Dorsolateral prefrontal cortex (tissue), 120 donors: ENCODE measurements at regions of chr5 and their contacts with region 1.

Region 1: GRCh38 chr5:180366326-180366725 is 13.2 kb upstream of the GFPT2 start:
- DNase-seq: peak; percentile 49 to 80 (median 72)
- H3K4me3 ChIP-seq: peak overlapping the region in 5 of 59 donors; percentile 2 to 20 (median 6)
- H3K27ac ChIP-seq: peak overlapping the region in 43 of 59 donors; percentile 11 to 89 (median 45)
- H3K27me3 ChIP-seq: no peaks in the 10 kb centered on the region
- CTCF ChIP-seq: peak in 6 of 56 donors; percentile 10 to 30 (median 14)

Region 2: GRCh38 chr5:180353048-180353979 is 13.0 kb before region 1 on chr5 and contains the start of gene GFPT2:
- intact Hi-C with region 1: loop called in 1 of 2 experiments (anchors 2 kb)
- DNase-seq: peak; percentile 73 to 91 (median 86)
- H3K4me3 ChIP-seq: peak within 1 kb of the TSS; percentile 48 to 98 (median 86)
- H3K27ac ChIP-seq: peak within 1 kb of the TSS in 43 of 59 donors; percentile 5 to 84 (median 57)
- H3K27me3 ChIP-seq: no peaks in the 10 kb centered on the region
- CTCF ChIP-seq: peak in 1 of 56 donors; percentile 10
- total RNA-seq, gene GFPT2: 19.3 to 78.0 (median 32.5) TPM

Region 3: DNA sequence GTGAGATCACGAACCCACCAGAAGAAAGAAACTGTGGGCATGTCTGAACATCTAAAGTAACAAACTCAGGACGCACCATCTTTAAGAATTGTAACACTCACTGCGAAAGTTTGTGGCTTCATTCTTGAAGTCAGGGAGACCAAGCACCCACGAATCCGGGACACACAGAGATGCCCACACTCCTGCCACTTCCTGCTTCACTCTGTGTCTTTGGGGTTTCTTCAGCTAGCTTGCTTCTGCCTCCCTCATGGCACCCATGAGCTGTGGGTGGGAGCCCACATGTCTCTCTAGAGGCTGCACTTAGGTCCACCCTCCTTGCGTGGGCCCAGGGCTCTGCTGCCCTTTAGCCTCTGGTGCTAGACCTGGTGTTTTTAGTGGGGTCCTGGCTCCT is 66.7 kb after region 1 on chr5:
- intact Hi-C with region 1: loop called in 1 of 2 experiments (anchors 5 kb)
- DNase-seq: no peak
- H3K4me3 ChIP-seq: no peak overlapping the region
- H3K27ac ChIP-seq: no peak overlapping the region
- H3K27me3 ChIP-seq: no peaks in the 10 kb centered on the region
- CTCF ChIP-seq: no peak